SK-N-SH (cell line): ENCODE measurements at regions of chr1 and their contacts with region 1.

Region 1: DNA sequence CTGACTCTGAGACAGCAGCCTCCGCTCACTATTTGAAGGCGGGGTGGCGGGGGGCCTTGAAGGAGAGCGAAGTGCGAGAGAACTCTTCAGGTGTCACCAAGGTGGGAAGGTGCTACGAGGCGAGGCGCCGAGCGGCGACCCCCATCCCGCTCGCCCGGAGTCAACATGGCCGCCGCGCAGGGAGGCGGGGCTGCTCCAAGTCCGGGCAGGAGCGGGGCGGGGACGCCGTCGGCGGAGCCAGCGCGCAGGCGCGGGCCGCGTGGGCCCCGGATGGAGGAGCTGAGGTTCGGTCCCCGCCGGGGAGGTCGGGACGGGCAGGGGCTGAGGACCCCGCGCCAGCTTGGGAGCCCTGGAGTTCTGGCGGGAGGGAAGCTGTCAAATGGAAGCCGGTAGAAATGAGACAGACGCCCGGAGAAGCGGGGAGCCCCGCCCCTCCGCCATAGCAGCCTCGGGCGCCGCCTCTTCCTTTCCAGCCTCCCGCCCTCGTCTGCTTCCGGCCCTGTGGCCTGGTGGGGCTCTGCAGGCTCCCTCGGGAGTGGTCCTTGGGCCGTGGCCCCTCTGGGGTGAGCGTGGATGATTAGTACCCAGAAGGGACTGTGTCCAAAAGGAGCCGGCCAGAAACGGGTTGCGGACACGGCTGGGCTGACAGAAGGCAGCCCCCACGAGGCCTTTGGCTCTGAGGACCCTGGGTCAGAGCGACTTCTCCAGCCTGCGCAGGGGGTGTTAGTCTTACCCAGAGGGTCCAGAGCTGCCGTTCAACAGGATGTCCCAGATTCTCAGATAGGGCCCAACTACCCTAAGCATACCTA is at the start of gene PIGV:
- DNase-seq: peak; percentile 97
- H3K4me3 ChIP-seq: peak within 1 kb of the TSS; percentile 71 to 88
- H3K27ac ChIP-seq: peak within 1 kb of the TSS; percentile 98 to 99
- H3K4me1 ChIP-seq: peaks cover 29 to 34% of the 10 kb centered on the region in 2 experiments
- H3K27me3 ChIP-seq: no peaks in the 10 kb centered on the region
- CTCF ChIP-seq: no peak
- EP300 ChIP-seq: no peak
- RAD21 ChIP-seq: no peak
- polyA plus RNA-seq, gene PIGV: 16.5 and 26.4 TPM in 2 replicates

Region 2: DNA sequence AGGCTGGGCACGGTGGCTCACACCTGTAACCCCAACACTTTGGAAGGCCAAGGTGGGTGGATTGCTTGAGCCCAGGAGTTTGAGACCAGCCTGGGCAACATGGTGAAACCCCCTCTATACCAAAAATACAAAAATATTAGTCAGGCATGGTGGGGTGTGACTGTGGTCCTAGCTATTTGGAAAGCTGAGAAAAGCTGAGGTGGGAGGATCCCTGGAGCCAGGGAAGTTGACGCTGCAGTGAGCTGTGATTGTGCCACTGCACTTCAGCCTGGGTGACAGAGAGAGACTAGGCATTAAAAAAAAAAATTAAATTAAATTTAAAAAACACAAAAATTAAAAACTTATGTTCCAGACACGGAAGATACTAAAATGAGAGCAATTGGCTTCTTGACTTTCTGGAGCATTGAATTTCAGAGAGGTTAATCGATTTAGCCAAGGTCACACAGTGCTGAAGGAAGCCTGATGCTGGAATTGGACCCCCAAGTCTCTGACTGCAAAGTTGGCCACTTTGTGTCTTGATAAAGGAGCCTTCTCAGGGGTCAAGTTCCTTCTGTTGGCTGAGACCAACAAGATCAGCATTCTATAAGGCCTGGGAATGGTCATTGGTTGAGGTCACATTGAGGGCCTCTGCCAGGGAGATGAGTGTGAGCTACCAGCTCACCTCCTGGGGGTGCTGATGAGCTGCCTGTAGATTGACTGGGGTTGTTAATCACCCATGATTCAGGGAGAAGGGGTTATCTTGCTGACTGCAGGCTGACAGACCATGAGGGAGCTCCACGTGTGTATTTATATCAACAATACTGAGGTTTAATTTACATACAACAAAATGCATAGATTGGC is 204.0 kb before region 1 on chr1:
- CTCF ChIA-PET with region 1: interaction called, 10 read pairs
- POLR2A ChIA-PET with region 1: no interaction called
- DNase-seq: peak; percentile 36
- H3K4me3 ChIP-seq: no peak overlapping the region
- H3K27ac ChIP-seq: no peak overlapping the region
- H3K4me1 ChIP-seq: no peaks in the 10 kb centered on the region
- H3K27me3 ChIP-seq: no peaks in the 10 kb centered on the region
- CTCF ChIP-seq: no peak; the same call in 1 of the 2 replicates
- EP300 ChIP-seq: no peak
- RAD21 ChIP-seq: peak; percentile 17; the same call in 1 of the 2 replicates

Region 3: DNA sequence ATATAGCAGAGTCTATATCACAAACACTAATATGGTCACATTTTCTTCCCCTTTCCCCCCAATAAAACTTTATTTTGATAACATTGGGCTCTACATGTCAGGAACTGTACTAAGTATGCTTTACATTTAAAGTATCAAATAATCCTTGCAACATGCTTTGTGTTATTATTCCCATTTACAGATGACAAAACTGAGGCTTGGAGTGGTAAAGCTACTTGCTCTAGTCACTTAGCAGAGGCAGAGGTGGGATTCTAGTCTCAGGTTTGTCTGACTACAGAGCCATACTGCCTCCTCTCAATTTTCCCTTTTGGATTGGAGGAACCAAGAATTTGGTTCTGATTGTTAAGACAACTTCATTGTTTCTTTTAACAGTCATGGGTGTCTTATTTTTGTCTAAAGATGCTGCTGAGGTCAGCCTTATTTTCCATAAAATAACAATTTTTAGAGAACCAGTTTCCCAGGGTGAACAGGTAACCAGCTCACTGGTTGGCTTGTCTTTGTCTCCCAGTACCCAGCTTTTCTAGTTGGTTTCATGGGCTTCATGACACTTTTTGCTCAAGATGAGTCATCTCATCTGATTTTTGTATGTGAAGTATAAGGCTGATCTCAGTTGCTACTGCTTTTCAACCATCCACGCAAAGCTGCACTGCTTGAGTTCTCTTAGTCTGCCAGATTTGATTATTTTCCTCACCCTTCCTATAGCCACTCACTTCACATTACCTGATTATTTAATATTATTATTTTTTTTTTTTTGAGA is 173.1 kb before region 1 on chr1:
- CTCF ChIA-PET with region 1: interaction called, 17 read pairs
- POLR2A ChIA-PET with region 1: interaction called, 3 read pairs
- DNase-seq: no peak
- H3K4me3 ChIP-seq: no peak overlapping the region
- H3K27ac ChIP-seq: no peak overlapping the region
- H3K4me1 ChIP-seq: peaks cover 0 to 2% of the 10 kb centered on the region in 2 experiments; a peak in 2 of 4 replicates
- H3K27me3 ChIP-seq: no peaks in the 10 kb centered on the region
- CTCF ChIP-seq: no peak
- EP300 ChIP-seq: no peak
- RAD21 ChIP-seq: no peak

Region 4: GRCh38 chr1:26695356-26696118 is 92.4 kb before region 1 on chr1 and contains the start of gene ARID1A:
- CTCF ChIA-PET with region 1: interaction called, 51 read pairs
- POLR2A ChIA-PET with region 1: interaction called, 44 read pairs
- DNase-seq: peak; percentile 89
- H3K4me3 ChIP-seq: peak within 1 kb of the TSS; percentile 74 to 83
- H3K27ac ChIP-seq: peak within 1 kb of the TSS; percentile 95 to 99
- H3K4me1 ChIP-seq: peaks cover 34 to 41% of the 10 kb centered on the region in 2 experiments
- H3K27me3 ChIP-seq: no peaks in the 10 kb centered on the region
- CTCF ChIP-seq: peak; percentile 18; the same call in 1 of the 2 replicates
- EP300 ChIP-seq: peak in 1 of 2 experiments; percentile 68; a peak in 2 of 4 replicates
- RAD21 ChIP-seq: 0 out of 2 replicates have a peak, but pooled peaks have one; percentile 18
- polyA plus RNA-seq, gene ARID1A: 14.2 and 26.5 TPM in 2 replicates

Region 5: DNA sequence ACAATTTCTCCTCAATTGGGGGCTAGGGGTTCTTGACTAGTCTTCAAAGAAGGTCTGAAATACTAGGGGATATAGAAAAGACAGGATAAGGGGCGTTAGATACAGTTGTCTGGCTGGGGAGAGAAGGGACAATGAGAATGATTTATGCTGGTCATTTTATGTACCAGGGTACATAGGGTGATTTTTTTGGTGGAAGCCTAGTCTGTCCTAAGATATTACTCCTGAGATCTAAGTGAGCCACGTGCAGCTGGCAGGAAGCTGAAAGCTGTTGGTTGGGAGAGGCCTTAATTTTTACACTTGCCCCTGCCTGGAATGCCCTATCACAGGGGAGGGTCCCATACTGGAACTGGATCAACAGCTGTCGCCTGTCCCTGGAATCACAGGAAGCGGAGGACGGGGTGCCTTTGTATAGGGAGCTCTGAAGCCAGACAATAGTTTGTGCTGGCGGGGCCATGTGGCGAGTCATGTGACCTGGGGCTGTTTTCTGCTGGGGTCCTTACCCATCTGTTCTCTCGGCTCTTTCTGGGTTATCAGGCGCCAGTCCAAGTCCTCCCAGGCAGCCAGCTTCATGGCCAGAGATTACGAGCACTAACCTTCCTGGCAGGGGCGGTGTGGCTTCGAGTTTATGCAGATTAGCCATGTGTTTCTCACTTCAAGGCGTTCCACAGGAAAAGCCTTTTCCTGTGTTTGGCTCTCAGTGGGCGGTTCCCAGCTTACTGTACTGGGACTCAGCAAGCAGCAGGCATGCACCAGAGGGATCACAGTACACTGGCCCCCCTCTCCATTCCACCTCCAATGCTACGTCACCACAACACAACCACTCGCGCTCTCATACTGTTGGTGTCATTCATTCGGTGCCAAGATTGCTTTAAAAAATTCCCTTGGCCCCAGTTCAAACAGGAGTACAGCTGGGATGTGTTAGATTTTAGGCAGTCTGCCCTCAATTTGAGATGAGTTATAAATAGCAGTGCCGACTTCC is 64.6 kb before region 1 on chr1:
- CTCF ChIA-PET with region 1: interaction called, 11 read pairs
- POLR2A ChIA-PET with region 1: interaction called, 3 read pairs
- DNase-seq: peak; percentile 86
- H3K4me3 ChIP-seq: peak overlapping the region in 1 of 2 experiments; percentile 6; a peak in 1 of 4 replicates
- H3K27ac ChIP-seq: peak overlapping the region; percentile 81 to 92
- H3K4me1 ChIP-seq: peaks cover 36 to 50% of the 10 kb centered on the region in 2 experiments
- H3K27me3 ChIP-seq: no peaks in the 10 kb centered on the region
- CTCF ChIP-seq: no peak
- EP300 ChIP-seq: peak in 1 of 2 experiments; percentile 70; a peak in 2 of 4 replicates
- RAD21 ChIP-seq: peak; percentile 17; the same call in 1 of the 2 replicates

Region 6: DNA sequence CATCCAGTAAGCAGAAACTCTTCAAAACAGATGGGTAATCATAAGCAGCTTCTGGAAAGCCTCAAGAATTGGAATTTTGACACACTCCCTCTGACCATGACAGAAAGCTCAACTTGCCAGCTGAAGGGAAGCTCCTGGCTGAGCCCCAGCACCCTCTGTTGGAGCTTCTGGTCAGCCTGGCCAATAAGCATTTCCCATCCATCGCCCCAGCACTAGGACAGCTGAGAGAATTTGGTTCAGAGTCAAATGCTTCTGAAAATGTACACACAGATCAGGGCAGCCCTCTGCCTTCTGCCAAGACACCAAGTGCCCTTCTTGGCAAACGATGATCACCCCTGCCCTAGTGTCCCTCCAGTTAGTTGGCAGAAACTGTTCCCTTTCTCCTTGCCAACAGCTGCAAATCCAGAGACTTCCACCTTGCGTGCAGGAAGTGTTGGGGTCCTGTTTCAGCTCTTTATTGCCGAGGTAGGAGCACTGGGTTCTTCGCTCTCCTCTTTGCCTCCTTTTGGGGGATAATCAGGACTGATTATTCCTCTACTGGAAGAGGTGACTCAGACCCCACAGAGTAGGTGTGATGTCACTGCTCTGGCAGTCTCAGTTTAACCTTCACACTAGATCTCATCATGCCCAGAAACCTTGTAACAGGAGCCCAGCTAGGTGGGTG is 11.7 kb after region 1 on chr1:
- CTCF ChIA-PET with region 1: interaction called, 56 read pairs
- POLR2A ChIA-PET with region 1: interaction called, 3 read pairs
- DNase-seq: peak; percentile 32
- H3K4me3 ChIP-seq: peak overlapping the region; percentile 4 to 9; a peak in 1 of 4 replicates
- H3K27ac ChIP-seq: peak overlapping the region; percentile 29 to 68
- H3K4me1 ChIP-seq: peaks cover 11 to 13% of the 10 kb centered on the region in 2 experiments
- H3K27me3 ChIP-seq: no peaks in the 10 kb centered on the region
- CTCF ChIP-seq: no peak
- EP300 ChIP-seq: peak in 1 of 2 experiments; percentile 42; a peak in 1 of 4 replicates
- RAD21 ChIP-seq: no peak

Region 7: DNA sequence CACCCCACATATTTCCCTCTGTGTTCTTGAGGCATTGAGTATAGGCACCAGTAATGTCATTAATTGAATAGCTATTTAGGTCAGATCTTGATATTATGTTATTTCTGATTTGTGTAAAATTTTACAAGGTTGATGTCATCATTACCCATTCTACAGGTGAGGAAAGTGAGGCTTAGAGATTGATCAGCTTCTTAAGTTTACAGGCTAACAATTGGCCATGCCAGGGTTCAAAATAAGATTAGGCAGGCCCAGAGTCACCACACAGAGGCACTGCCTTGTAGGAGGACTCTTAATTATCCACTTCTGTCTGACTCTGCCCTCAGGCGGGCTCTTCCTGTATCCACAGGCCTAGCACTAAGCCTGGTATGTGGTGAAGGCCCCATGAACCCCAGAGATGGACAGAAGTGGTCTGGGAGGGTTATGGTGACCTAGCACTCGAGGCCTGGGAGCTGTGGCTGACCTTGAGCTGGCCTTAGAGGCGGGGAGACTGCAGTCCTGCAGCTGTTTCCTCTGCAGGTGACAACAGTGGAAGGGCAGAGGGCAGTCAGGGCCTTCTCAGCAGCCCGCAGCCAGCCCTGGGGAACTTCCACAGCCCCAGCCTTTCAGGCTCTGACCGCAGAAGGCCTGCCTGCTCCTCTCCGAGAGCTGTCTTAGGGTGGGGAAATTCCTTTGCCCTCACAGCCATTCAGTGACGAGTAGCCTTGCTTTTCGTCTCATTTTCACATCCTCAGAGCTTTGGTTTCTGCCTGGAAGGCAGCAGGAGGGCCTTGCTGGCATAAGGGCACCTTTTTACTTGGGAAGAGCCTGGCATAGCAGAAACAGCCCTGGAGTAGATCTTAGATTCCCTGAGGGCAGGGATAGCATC is 50.8 kb after region 1 on chr1:
- CTCF ChIA-PET with region 1: no interaction called
- POLR2A ChIA-PET with region 1: no interaction called
- DNase-seq: no peak
- H3K4me3 ChIP-seq: no peak overlapping the region
- H3K27ac ChIP-seq: no peak overlapping the region
- H3K4me1 ChIP-seq: no peaks in the 10 kb centered on the region
- H3K27me3 ChIP-seq: no peaks in the 10 kb centered on the region
- CTCF ChIP-seq: no peak
- EP300 ChIP-seq: no peak
- RAD21 ChIP-seq: no peak